Dorsolateral prefrontal cortex (tissue), 120 donors: ENCODE measurements at regions of chr17 and their contacts with region 1.

Region 1: GRCh38 chr17:69607162-69607834 is 192.8 kb downstream of the MAP2K6 start:
- DNase-seq: peak; percentile 32 to 84 (median 77)
- H3K4me3 ChIP-seq: peak overlapping the region in 5 of 59 donors; percentile 5 to 30 (median 9)
- H3K27ac ChIP-seq: peak overlapping the region in 52 of 59 donors; percentile 0 to 77 (median 57)
- H3K27me3 ChIP-seq: no peaks in the 10 kb centered on the region
- CTCF ChIP-seq: peak; percentile 79 to 98 (median 91)

Region 2: GRCh38 chr17:69575346-69575761 is 31.9 kb before region 1 on chr17:
- intact Hi-C with region 1: loop called in 1 of 2 experiments (anchors 5 kb)
- DNase-seq: no peak
- H3K4me3 ChIP-seq: no peak overlapping the region
- H3K27ac ChIP-seq: peak overlapping the region in 1 of 59 donors; percentile 2
- H3K27me3 ChIP-seq: no peaks in the 10 kb centered on the region
- CTCF ChIP-seq: no peak

Region 3: GRCh38 chr17:69819316-69820087 is 212.2 kb after region 1 on chr17:
- intact Hi-C with region 1: no loop called
- DNase-seq: no peak
- H3K4me3 ChIP-seq: no peak overlapping the region
- H3K27ac ChIP-seq: no peak overlapping the region
- H3K27me3 ChIP-seq: no peaks in the 10 kb centered on the region
- CTCF ChIP-seq: no peak

Region 4: DNA sequence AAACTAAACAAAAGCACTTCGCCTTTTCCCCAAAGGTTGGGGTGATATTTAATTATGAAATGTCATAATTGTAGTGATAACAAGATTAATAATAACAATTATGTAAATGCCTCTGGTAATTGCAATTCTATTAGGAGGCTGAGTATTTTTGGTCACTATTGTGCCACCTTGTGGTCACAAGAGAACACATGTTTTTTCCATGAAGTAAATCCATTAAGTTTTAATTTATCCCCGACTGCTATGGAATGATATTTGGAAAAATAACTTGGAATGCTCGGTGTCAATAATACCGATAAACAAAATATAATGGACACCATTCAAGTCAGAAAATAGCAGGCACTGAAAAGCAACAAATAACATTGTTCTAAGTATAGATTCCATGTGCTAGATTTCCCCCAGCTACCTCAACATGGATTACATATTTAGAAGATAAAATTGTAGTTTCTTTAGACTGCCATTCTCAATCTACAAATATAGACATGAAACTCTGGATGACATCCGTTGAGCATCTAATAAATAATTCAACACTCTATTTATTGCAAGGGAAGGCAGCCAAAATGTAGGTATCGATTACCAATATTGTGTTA is 537.1 kb after region 1 on chr17:
- intact Hi-C with region 1: loop called (anchors 2 to 5 kb)
- DNase-seq: no peak
- H3K4me3 ChIP-seq: peak overlapping the region in 7 of 59 donors; percentile 2 to 40 (median 25)
- H3K27ac ChIP-seq: peak overlapping the region in 1 of 59 donors; percentile 1
- H3K27me3 ChIP-seq: no peaks in the 10 kb centered on the region
- CTCF ChIP-seq: peak; percentile 69 to 96 (median 83)

Region 5: GRCh38 chr17:70622368-70623260 is 1015.3 kb after region 1 on chr17:
- intact Hi-C with region 1: loop called in 1 of 2 experiments (anchors 2 kb)
- DNase-seq: peak; percentile 14 to 87 (median 76)
- H3K4me3 ChIP-seq: peak overlapping the region in 36 of 59 donors; percentile 1 to 53 (median 24)
- H3K27ac ChIP-seq: peak overlapping the region; percentile 2 to 93 (median 84)
- H3K27me3 ChIP-seq: no peaks in the 10 kb centered on the region
- CTCF ChIP-seq: peak; percentile 43 to 95 (median 79)